A673 (cell line): ENCODE measurements at regions of chr1 and their contacts with region 1.

Region 1: DNA sequence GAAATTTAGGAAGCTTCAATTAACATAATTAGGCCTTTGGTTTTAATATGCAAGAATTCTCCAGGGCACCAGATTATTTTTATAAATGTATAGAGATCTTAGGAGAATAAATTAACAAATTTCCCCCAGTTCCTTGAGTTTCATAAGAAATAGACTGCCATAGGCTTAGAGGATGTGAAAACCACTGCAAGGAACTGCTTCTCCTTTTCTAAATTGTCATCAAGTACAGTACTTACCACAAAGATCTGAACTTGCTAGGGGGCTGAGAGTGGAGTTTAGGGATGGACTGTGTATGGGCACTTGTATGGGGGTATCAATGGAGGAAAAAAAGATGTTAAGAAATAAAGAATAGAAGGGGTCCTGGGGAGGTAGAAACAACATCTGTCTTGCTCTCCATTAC is 31.1 kb downstream of the LHX8 start:
- DNase-seq: no peak
- H3K4me3 ChIP-seq: no peak overlapping the region
- H3K27ac ChIP-seq: no peak overlapping the region
- H3K4me1 ChIP-seq: no peaks in the 10 kb centered on the region
- H3K27me3 ChIP-seq: peaks cover 57% of the 10 kb centered on the region
- CTCF ChIP-seq: no peak

Region 2: GRCh38 chr1:74995821-74996220 is 169.4 kb before region 1 on chr1:
- CTCF ChIA-PET with region 1: no interaction called
- POLR2A ChIA-PET with region 1: no interaction called
- intact Hi-C with region 1: no loop called
- DNase-seq: no peak
- H3K4me3 ChIP-seq: no peak overlapping the region
- H3K27ac ChIP-seq: no peak overlapping the region
- H3K4me1 ChIP-seq: no peaks in the 10 kb centered on the region
- H3K27me3 ChIP-seq: no peaks in the 10 kb centered on the region
- CTCF ChIP-seq: no peak

Region 3: GRCh38 chr1:75100481-75101092 is 64.7 kb before region 1 on chr1:
- CTCF ChIA-PET with region 1: no interaction called
- POLR2A ChIA-PET with region 1: no interaction called
- intact Hi-C with region 1: loop called (anchors 10 kb)
- DNase-seq: no peak
- H3K4me3 ChIP-seq: no peak overlapping the region
- H3K27ac ChIP-seq: no peak overlapping the region
- H3K4me1 ChIP-seq: no peaks in the 10 kb centered on the region
- H3K27me3 ChIP-seq: peaks cover 10% of the 10 kb centered on the region
- CTCF ChIP-seq: no peak